ENCODE measurements at regions of chr19 and their contacts with region 1.

Region 1: GRCh38 chr19:15776991-15777970 is 10.2 kb upstream of the OR10H5 start:
- DNase-seq: no peak
- H3K4me3 ChIP-seq: no peak overlapping the region
- H3K27ac ChIP-seq: no peak overlapping the region
- H3K4me1 ChIP-seq: no peaks in the 10 kb centered on the region
- H3K27me3 ChIP-seq: no peaks in the 10 kb centered on the region
- CTCF ChIP-seq: no peak

Region 2: GRCh38 chr19:15640294-15640903 is 136.9 kb before region 1 on chr19 and contains the start of gene CYP4F3:
- CTCF ChIA-PET with region 1: no interaction called
- POLR2A ChIA-PET with region 1: no interaction called
- intact Hi-C with region 1: no loop called
- DNase-seq: peak; percentile 64
- H3K4me3 ChIP-seq: no peak within 1 kb of the TSS
- H3K27ac ChIP-seq: no peak within 1 kb of the TSS
- H3K4me1 ChIP-seq: no peaks in the 10 kb centered on the region
- H3K27me3 ChIP-seq: no peaks in the 10 kb centered on the region
- CTCF ChIP-seq: no peak
- total RNA-seq, gene CYP4F3: not detected in 2 replicates

Region 3: GRCh38 chr19:15675560-15675959 is 101.7 kb before region 1 on chr19:
- CTCF ChIA-PET with region 1: no interaction called
- POLR2A ChIA-PET with region 1: no interaction called
- intact Hi-C with region 1: loop called (anchors 1 kb)
- DNase-seq: no peak
- H3K4me3 ChIP-seq: no peak overlapping the region
- H3K27ac ChIP-seq: no peak overlapping the region
- H3K4me1 ChIP-seq: no peaks in the 10 kb centered on the region
- H3K27me3 ChIP-seq: no peaks in the 10 kb centered on the region
- CTCF ChIP-seq: no peak

Region 4: DNA sequence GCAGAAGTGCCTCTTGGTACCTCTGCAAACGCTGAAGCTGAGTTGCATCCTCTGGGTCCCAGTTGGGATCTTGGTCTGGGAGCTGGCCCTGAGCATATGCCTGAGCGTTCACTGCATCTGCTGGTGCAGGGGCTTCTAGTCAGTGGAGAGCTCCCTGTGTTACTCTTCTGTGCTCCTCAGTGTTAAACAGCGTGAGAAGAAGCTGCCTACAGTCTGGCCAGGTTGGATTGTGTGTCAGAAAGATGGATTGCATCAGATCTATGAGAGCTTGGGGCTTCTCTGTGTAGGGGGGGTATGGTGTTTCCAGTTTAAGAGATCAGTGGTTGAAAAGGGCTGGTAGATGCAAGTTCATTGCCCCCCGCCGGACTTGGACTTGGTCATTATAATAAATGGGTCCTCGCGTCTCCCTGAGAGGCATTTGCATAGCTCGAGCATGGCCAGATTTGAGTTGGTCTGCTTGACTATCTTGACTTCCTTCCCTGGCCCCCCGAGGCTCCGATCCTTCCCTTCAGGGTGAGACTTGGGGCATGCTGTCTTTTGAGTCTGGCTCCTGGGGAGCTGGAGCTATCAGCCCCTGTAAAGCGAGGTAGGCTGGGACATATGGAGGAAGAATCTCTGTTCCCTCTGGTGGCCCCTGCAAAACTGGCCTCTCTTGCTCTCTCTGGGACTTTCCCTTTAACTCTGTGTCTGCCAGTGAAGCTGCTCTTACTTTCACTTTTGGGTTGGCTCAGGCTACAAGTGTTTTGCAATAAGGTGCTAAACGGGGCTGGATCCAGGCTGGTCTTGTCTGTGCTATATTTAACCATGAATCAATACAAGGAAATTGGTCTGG is 224.4 kb after region 1 on chr19:
- CTCF ChIA-PET with region 1: no interaction called
- POLR2A ChIA-PET with region 1: no interaction called
- intact Hi-C with region 1: no loop called
- DNase-seq: no peak
- H3K4me3 ChIP-seq: no peak overlapping the region
- H3K27ac ChIP-seq: no peak overlapping the region
- H3K4me1 ChIP-seq: no peaks in the 10 kb centered on the region
- H3K27me3 ChIP-seq: no peaks in the 10 kb centered on the region
- CTCF ChIP-seq: no peak

Measured in A673 (cell line).